IMR-90 (cell line): ENCODE measurements at regions of chr9 and their contacts with region 1.

Region 1: DNA sequence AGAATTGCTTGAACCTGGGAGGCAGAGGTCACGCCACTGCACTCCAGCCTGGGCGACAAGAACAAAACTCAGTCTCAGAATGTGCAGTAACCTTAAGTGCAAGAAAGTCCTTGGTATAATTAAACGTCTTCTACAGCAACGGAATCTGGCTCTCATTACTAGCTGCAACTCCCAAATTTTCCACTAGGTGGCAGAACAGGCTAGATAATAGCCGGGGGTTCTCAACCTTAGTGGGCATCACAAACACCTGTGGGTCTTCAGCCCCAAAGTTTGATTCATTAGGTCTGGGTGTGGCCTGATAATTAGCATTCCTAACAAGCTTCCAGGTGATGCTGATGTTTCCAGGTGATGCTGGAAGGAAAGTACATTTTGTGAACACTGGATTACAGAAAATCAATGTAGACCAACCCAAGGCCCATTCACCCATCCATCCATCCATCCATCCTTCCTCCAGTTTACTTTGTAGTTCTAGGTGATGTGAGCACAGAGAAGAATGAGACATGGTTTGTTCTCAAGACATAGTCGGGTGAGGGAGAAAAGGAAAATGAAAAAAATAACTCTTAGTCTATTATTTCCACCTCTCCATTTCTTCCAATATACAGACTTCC is 37.3 kb downstream of the FBXW2 start:
- DNase-seq: peak; percentile 34
- ATAC-seq: peak; percentile 81
- H3K4me3 ChIP-seq: no peak overlapping the region
- H3K27ac ChIP-seq: no peak overlapping the region
- H3K4me1 ChIP-seq: peaks cover 7% of the 10 kb centered on the region
- H3K27me3 ChIP-seq: no peaks in the 10 kb centered on the region
- CTCF ChIP-seq: peak; percentile 80
- POLR2A ChIP-seq: no peak
- RAD21 ChIP-seq: peak; percentile 90

Region 2: GRCh38 chr9:120936011-120936763 is 180.3 kb after region 1 on chr9:
- CTCF ChIA-PET with region 1: no interaction called
- POLR2A ChIA-PET with region 1: no interaction called
- dilution Hi-C with region 1: no loop called
- in situ Hi-C with region 1: no loop called
- intact Hi-C with region 1: loop called (anchors 2 kb)
- DNase-seq: peak; percentile 95
- ATAC-seq: peak; percentile 61
- H3K4me3 ChIP-seq: peak overlapping the region; percentile 20
- H3K27ac ChIP-seq: peak overlapping the region; percentile 99
- H3K4me1 ChIP-seq: peaks cover 39% of the 10 kb centered on the region
- H3K27me3 ChIP-seq: no peaks in the 10 kb centered on the region
- CTCF ChIP-seq: peak; percentile 94
- POLR2A ChIP-seq: 0 out of 2 replicates have a peak, but pooled peaks have one; percentile 29
- RAD21 ChIP-seq: peak; percentile 91

Region 3: GRCh38 chr9:120974921-120975320 is 219.0 kb after region 1 on chr9:
- CTCF ChIA-PET with region 1: no interaction called
- POLR2A ChIA-PET with region 1: no interaction called
- dilution Hi-C with region 1: no loop called
- in situ Hi-C with region 1: no loop called
- intact Hi-C with region 1: loop called (anchors 5 kb)
- DNase-seq: no peak
- ATAC-seq: no peak
- H3K4me3 ChIP-seq: no peak overlapping the region
- H3K27ac ChIP-seq: no peak overlapping the region
- H3K4me1 ChIP-seq: peaks cover 5% of the 10 kb centered on the region
- H3K27me3 ChIP-seq: no peaks in the 10 kb centered on the region
- CTCF ChIP-seq: no peak
- POLR2A ChIP-seq: no peak
- RAD21 ChIP-seq: no peak

Region 4: DNA sequence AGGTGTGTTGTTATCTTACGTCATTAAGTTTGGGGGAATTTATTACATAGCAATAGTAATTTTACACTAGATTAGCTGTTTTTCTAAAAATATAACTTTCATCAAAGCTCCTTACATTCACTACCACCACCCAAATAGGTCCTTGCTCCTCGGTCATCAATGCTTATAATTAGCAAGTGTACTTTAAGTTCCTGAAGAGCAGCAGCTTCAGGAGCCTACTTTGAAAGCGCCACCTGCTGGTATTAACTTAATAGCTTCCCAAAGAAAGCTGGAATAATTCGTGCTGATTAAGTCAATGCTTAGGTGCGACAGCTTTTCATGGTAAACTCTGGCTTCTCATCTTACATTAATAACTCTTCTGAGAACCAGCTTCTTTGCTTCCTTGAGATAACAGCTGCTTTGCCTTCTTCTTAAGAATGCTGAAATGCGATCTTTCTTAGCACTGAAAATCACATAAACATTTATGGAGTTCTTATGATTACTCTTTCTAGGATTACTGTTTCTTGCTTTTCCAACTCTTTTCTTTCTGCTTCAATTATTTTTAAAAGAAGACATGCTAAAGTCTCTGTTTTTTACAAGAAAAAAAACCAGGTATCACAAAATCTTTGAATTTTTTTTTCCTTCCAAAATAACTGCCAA is 304.2 kb after region 1 on chr9:
- CTCF ChIA-PET with region 1: interaction called, 6 read pairs
- POLR2A ChIA-PET with region 1: no interaction called
- dilution Hi-C with region 1: no loop called
- in situ Hi-C with region 1: loop called (anchors 10 kb)
- intact Hi-C with region 1: no loop called
- DNase-seq: peak; percentile 84
- ATAC-seq: peak; percentile 80
- H3K4me3 ChIP-seq: no peak overlapping the region
- H3K27ac ChIP-seq: no peak overlapping the region
- H3K4me1 ChIP-seq: peaks cover 1% of the 10 kb centered on the region; the same call in 1 of the 2 replicates
- H3K27me3 ChIP-seq: no peaks in the 10 kb centered on the region
- CTCF ChIP-seq: peak; percentile 74
- POLR2A ChIP-seq: no peak
- RAD21 ChIP-seq: peak; percentile 65

Region 5: GRCh38 chr9:121074635-121075385 is 318.9 kb after region 1 on chr9 and contains the start of gene CNTRL:
- CTCF ChIA-PET with region 1: no interaction called
- POLR2A ChIA-PET with region 1: no interaction called
- dilution Hi-C with region 1: no loop called
- in situ Hi-C with region 1: no loop called
- intact Hi-C with region 1: loop called (anchors 5 kb)
- DNase-seq: peak; percentile 85
- ATAC-seq: peak; percentile 91
- H3K4me3 ChIP-seq: peak within 1 kb of the TSS; percentile 73
- H3K27ac ChIP-seq: peak within 1 kb of the TSS; percentile 85
- H3K4me1 ChIP-seq: peaks cover 1% of the 10 kb centered on the region; the same call in 1 of the 2 replicates
- H3K27me3 ChIP-seq: no peaks in the 10 kb centered on the region
- CTCF ChIP-seq: no peak
- POLR2A ChIP-seq: peak; percentile 57; the same call in 1 of the 2 replicates
- RAD21 ChIP-seq: no peak
- total RNA-seq, gene CNTRL: 7.3 and 10.6 TPM in 2 replicates

Region 6: DNA sequence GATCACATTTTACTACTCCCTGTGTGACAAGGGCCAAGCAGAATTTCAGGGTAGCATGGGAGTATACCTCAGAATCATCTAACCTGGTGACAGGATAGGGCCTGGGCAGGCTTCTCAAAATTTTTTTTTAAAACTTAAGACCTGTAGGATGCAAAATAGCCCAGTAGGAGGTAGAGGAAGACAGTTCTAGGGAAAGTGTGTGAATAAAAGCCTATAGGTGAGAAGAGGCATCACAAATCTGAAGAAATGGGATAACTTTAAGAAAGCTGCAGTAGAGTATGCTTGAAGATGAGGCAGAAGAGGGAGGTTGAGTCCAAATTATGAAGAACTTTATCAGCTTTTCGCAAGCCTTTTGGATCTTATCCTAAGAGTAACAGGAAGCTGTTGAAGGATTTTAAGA is 351.1 kb after region 1 on chr9:
- CTCF ChIA-PET with region 1: no interaction called
- POLR2A ChIA-PET with region 1: no interaction called
- dilution Hi-C with region 1: no loop called
- in situ Hi-C with region 1: no loop called
- intact Hi-C with region 1: no loop called
- DNase-seq: no peak
- ATAC-seq: no peak
- H3K4me3 ChIP-seq: no peak overlapping the region
- H3K27ac ChIP-seq: no peak overlapping the region
- H3K4me1 ChIP-seq: no peaks in the 10 kb centered on the region
- H3K27me3 ChIP-seq: no peaks in the 10 kb centered on the region
- CTCF ChIP-seq: no peak; the same call in 1 of the 2 replicates
- POLR2A ChIP-seq: no peak
- RAD21 ChIP-seq: no peak

Region 7: DNA sequence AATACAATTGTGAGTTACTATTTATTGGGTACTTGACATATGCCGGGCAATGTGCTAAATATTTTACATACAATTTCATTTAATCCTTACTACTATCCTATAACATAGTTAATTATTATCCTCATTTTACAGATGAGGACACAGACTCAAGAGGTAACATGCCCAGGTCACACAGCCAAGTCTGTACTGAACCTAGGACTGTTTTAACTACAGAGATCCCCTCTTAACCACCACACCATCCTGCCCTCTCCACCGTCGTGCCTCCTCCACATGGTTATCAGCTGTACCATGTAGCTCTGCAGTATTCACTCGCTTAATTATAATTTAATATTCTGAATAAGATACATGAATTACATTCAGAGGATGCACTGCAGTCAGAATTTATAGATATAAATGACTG is 440.5 kb after region 1 on chr9:
- CTCF ChIA-PET with region 1: no interaction called
- POLR2A ChIA-PET with region 1: no interaction called
- dilution Hi-C with region 1: no loop called
- in situ Hi-C with region 1: no loop called
- intact Hi-C with region 1: loop called (anchors 5 kb)
- DNase-seq: no peak
- ATAC-seq: no peak
- H3K4me3 ChIP-seq: no peak overlapping the region
- H3K27ac ChIP-seq: no peak overlapping the region
- H3K4me1 ChIP-seq: peaks cover 8% of the 10 kb centered on the region
- H3K27me3 ChIP-seq: no peaks in the 10 kb centered on the region
- CTCF ChIP-seq: no peak
- POLR2A ChIP-seq: no peak
- RAD21 ChIP-seq: no peak

Region 8: DNA sequence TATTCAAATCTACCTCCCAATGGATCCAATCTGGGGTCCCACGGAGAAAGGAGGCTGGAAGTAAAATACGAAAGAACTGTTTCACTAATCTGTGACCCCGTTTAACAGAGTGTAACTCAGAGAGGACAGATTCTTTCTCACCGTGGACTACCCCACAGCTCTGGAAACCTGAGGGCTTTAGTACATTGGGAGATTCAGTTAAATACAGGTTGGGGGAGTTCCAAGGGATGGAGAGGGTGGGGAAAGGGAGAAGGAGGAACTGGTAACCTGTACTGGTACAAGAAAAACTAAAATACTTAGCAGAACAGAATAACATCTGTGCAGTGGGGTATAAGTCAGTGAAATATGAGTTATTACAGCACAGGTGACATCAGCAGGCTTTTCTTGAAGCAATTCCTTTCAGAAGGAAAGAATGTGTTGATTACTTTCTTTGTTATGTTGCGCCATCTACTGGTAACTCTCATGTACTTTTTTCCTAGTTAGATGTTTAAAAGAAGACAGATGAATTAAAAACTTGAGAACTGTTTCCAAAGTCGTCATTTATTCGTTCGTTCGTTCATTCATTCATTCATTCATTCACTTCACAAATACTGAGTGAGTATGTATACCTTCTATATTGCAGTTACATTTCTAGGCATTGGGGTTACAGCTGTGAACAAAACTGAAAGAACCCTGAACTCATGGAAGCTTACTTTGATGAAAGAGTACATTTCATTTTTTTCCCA is 644.1 kb after region 1 on chr9:
- CTCF ChIA-PET with region 1: no interaction called
- POLR2A ChIA-PET with region 1: no interaction called
- dilution Hi-C with region 1: no loop called
- in situ Hi-C with region 1: loop called (anchors 25 kb)
- intact Hi-C with region 1: no loop called
- DNase-seq: peak; percentile 86
- ATAC-seq: peak; percentile 27
- H3K4me3 ChIP-seq: no peak overlapping the region
- H3K27ac ChIP-seq: no peak overlapping the region
- H3K4me1 ChIP-seq: peaks cover 11% of the 10 kb centered on the region
- H3K27me3 ChIP-seq: no peaks in the 10 kb centered on the region
- CTCF ChIP-seq: peak; percentile 81
- POLR2A ChIP-seq: no peak
- RAD21 ChIP-seq: peak; percentile 84

Region 9: DNA sequence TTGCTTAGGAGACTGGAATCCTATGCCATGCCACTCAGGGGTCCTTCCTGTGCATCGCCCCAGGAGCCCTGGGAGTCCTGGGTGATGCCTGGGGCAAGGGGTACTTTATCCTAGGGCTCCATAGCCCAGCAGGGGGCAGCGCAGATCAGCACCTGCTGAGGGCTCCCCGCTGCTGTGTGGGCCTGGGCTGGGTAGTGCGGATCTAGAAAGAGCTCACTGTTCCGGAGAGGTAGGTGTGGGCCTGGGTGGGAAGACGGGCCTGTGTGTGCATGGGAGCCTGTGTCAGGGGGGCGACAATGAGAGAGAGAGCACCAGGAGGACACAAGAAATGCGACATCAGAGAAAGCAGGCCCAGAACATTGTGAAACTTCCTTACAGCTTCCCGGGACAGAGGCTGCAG is 884.1 kb after region 1 on chr9:
- CTCF ChIA-PET with region 1: no interaction called
- POLR2A ChIA-PET with region 1: no interaction called
- dilution Hi-C with region 1: no loop called
- in situ Hi-C with region 1: no loop called
- intact Hi-C with region 1: no loop called
- DNase-seq: peak; percentile 17
- ATAC-seq: peak; percentile 64
- H3K4me3 ChIP-seq: no peak overlapping the region
- H3K27ac ChIP-seq: no peak overlapping the region
- H3K4me1 ChIP-seq: peaks cover 11% of the 10 kb centered on the region; the same call in 1 of the 2 replicates
- H3K27me3 ChIP-seq: no peaks in the 10 kb centered on the region
- CTCF ChIP-seq: peak; percentile 52
- POLR2A ChIP-seq: no peak
- RAD21 ChIP-seq: peak; percentile 65